ENCODE measurements at regions of chr6 and their contacts with region 1.

Region 1: GRCh38 chr6:128282961-128283360 is 237.4 kb downstream of the PTPRK start:
- DNase-seq: no peak
- ATAC-seq: no peak
- H3K4me3 ChIP-seq: no peak overlapping the region
- H3K27ac ChIP-seq: no peak overlapping the region
- H3K4me1 ChIP-seq: no peaks in the 10 kb centered on the region
- H3K27me3 ChIP-seq: no peaks in the 10 kb centered on the region
- CTCF ChIP-seq: no peak

Region 2: GRCh38 chr6:128307671-128308070 is 24.7 kb after region 1 on chr6:
- intact Hi-C with region 1: loop called in 1 of 2 experiments (anchors 2 kb)
- DNase-seq: no peak
- ATAC-seq: no peak
- H3K4me3 ChIP-seq: no peak overlapping the region
- H3K27ac ChIP-seq: no peak overlapping the region
- H3K4me1 ChIP-seq: no peaks in the 10 kb centered on the region
- H3K27me3 ChIP-seq: no peaks in the 10 kb centered on the region
- CTCF ChIP-seq: no peak

Region 3: GRCh38 chr6:128456510-128457230 is 173.7 kb after region 1 on chr6:
- intact Hi-C with region 1: no loop called
- DNase-seq: no peak
- ATAC-seq: no peak
- H3K4me3 ChIP-seq: no peak overlapping the region
- H3K27ac ChIP-seq: no peak overlapping the region
- H3K4me1 ChIP-seq: no peaks in the 10 kb centered on the region
- H3K27me3 ChIP-seq: no peaks in the 10 kb centered on the region
- CTCF ChIP-seq: no peak

Measured in psoas muscle (tissue), 8 donors.